Panc1 (cell line): ENCODE measurements at regions of chr7 and their contacts with region 1.

Region 1: DNA sequence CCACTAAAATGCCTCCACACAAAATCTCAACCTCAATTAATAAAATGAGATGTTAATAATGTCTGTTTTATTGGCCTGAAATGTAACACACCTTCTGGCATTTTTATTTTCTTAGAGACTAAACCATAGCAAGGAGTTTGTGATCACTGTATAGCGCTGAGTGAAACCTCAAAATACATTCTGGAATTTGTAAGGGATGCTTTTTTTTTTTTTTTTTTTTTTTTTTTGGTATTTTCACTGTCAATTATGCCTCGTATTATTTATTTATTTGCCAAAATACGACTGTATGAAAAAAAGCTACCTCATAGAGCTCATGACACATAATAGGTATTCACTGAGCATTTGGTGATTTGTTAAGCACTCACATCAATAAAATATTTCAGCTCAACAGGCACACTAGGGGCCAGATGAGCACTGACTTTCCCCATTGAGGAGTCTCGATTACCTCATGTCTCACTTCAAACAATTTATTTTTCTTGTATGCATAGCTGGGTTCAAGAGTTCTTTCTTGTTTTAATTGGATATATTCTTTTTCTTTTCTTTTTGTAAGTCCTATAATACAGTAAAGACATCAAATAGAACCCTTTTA is 36.5 kb downstream of the SEMA3C start:
- DNase-seq: no peak
- ATAC-seq: no peak
- H3K4me3 ChIP-seq: no peak overlapping the region
- H3K27ac ChIP-seq: peak overlapping the region; percentile 92
- H3K4me1 ChIP-seq: peaks cover 94% of the 10 kb centered on the region
- H3K27me3 ChIP-seq: no peaks in the 10 kb centered on the region
- CTCF ChIP-seq: no peak

Region 2: GRCh38 chr7:80851894-80852476 is 30.3 kb before region 1 on chr7:
- CTCF ChIA-PET with region 1: no interaction called
- POLR2A ChIA-PET with region 1: interaction called, 19 read pairs
- in situ Hi-C with region 1: no loop called
- intact Hi-C with region 1: no loop called
- DNase-seq: peak; percentile 80
- ATAC-seq: peak; percentile 71
- H3K4me3 ChIP-seq: no peak overlapping the region
- H3K27ac ChIP-seq: peak overlapping the region; percentile 60
- H3K4me1 ChIP-seq: peaks cover 63% of the 10 kb centered on the region
- H3K27me3 ChIP-seq: no peaks in the 10 kb centered on the region
- CTCF ChIP-seq: no peak

Region 3: DNA sequence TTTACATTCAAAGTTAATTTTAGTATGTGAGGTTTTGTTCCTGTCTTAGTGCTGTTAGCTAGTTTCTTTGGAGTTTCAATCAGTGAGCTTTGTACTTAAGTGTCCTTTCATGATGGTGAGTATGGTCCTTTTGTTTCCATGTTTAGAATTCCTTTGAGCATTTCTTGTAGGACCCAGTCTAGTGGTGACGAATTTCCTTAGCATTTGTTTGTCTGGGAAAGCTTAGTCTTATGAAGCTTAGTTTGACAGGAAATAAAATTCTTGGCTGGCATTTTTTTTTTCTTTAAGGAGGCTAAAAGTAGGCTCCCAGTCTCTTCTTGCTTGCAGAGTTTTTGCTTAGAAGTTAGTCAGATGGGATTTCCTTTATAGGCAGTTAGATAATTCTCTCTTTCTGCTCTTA is 245.7 kb after region 1 on chr7:
- CTCF ChIA-PET with region 1: no interaction called
- POLR2A ChIA-PET with region 1: no interaction called
- in situ Hi-C with region 1: no loop called
- intact Hi-C with region 1: no loop called
- DNase-seq: no peak
- ATAC-seq: no peak
- H3K4me3 ChIP-seq: no peak overlapping the region
- H3K27ac ChIP-seq: no peak overlapping the region; the same call in 1 of the 2 replicates
- H3K4me1 ChIP-seq: no peaks in the 10 kb centered on the region
- H3K27me3 ChIP-seq: no peaks in the 10 kb centered on the region
- CTCF ChIP-seq: no peak